PC-9 (cell line): ENCODE measurements at regions of chr2 and their contacts with region 1.

Region 1: DNA sequence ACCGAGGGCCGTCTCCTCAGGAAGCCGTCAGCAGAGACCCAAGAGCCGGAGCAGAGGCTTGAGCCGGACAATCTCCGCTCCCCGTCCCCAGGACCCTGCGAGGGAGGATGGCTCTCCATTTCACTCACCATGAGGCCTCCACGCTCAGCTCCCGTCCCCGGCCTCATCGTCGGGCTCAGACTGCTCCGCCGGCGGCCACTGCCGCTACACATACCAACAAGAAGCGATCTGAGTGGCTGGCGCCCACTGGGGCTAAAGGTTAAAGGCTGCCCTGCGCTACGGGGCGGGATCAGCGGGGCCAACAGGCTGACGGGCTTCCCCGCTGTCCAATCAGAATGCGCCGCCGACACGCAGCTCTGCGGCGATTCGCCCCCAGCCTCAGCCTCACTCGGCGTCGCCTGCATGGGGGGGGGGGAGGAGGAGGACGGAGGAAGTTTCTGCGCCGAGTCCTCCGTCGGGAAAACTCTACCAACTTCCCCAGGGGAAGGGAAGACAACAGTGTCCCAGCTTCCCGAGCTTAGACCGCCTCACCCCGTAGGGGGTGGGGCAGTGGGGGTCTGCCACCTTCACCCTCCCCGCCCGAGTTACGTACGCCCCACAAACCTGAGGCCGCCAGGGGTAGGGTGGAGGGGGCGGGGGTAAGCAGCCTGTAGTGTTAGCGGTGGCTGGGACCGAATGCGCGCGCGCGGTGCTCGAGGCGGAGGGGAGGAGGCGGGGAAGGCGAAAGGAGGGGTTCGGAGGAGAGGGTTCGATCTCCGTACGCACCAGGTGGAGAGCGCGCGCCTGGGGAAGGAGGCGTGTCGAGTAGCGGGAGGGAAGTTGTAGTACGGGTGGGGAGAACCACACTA is at the start of gene PRPF40A:
- DNase-seq: peak; percentile 93 to 98
- H3K4me3 ChIP-seq: peak within 1 kb of the TSS; percentile 87
- H3K27ac ChIP-seq: peak within 1 kb of the TSS; percentile 82
- H3K4me1 ChIP-seq: peaks cover 21% of the 10 kb centered on the region
- H3K27me3 ChIP-seq: no peaks in the 10 kb centered on the region
- CTCF ChIP-seq: no peak
- total RNA-seq, gene PRPF40A: 94.1 and 119 TPM in 2 replicates

Region 2: DNA sequence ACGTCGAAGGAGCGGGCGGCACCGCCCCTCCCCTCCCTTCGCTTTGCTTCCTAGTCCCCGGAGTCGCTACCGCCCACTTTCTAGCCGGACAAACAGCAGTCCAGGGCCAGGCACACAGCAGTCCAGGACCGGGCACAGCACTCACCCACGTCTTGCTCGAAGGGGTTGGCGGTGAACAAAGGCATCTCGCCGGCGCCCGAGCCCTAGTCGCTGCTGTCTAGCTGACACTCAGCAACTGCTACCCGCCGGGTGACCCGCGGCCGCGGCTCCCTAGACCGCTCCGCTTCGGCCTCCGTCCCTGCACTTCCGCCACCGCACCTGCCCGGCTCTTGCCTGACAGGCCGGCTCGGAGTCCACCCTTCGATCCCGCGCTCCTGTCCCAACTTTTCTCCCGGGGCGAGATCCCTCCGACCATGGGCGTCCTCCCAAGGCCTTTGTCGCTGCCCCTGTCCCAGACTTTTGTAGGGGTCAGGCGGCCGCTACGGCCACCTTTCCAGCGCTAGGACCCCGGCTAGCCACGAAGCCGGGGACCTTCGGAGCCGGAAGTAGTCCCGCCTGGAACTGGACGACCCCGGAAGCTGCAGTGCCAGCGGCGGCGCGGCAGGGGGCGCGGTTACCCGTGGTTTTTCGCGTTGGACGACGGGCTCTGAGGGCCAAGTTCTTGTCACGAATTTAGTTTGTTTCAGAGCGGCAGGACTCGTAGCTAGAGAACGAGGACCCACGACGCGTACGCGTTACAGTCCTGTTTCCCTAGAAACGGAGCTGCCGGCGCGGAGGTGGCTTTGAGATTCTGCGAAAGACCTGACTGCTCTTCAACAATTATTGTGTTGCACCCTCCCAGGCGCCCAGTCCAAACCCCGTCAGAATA is 541.8 kb before region 1 on chr2 and contains the start of gene STAM2:
- CTCF ChIA-PET with region 1: interaction called, 3 read pairs
- POLR2A ChIA-PET with region 1: interaction called, 5 read pairs
- intact Hi-C with region 1: loop called (anchors 1 kb)
- DNase-seq: peak; percentile 80 to 94
- H3K4me3 ChIP-seq: peak within 1 kb of the TSS; percentile 83
- H3K27ac ChIP-seq: peak within 1 kb of the TSS; percentile 84
- H3K4me1 ChIP-seq: peaks cover 22% of the 10 kb centered on the region
- H3K27me3 ChIP-seq: no peaks in the 10 kb centered on the region
- CTCF ChIP-seq: peak; percentile 95
- total RNA-seq, gene STAM2: 14.6 and 16.0 TPM in 2 replicates

Region 3: DNA sequence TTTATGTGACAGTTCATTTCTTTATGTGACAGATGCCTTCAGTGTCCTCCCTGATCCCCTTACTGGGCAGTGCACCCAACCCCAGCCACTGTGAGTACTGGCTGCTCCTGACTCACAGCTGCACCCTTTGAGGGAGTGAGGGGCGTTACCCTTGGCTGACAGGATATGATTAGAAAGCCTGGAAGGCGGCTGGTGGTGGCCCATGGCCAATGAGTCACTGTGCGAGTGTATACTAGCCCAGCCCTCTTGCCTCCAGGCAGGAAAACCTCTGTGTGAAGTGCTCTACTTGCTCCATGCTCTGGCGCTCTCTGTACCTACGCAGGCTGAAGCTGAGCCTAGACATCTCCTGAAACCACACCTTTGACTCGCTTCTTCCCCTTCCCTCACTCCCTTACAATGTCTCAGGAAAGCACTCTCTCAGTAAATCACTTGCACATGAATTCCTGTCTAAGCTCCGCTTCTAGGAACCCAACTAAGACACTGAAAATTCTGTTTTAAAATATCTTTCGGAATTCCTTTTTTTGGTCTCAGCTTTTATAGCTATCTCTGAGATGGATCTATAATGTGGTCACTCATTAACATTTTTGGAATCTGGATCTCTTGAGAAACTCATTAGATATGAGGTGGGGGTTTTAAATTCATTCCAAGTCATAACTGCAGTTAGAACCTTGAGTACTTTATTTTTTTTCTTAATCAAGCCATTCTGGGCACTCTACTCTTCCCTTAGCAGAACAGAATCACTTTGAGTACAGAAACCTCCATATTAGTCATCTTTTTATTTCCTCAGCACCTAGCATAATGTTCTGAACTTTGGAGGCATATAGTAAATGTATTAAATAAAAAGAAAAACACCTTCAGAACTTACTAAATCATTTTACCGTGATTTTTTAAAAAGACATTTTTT is 516.6 kb before region 1 on chr2:
- CTCF ChIA-PET with region 1: no interaction called
- POLR2A ChIA-PET with region 1: no interaction called
- intact Hi-C with region 1: loop called (anchors 1 kb)
- DNase-seq: peak; percentile 94 to 97
- H3K4me3 ChIP-seq: peak overlapping the region; percentile 36; the same call in 1 of the 2 replicates
- H3K27ac ChIP-seq: peak overlapping the region; percentile 77
- H3K4me1 ChIP-seq: peaks cover 24% of the 10 kb centered on the region
- H3K27me3 ChIP-seq: no peaks in the 10 kb centered on the region
- CTCF ChIP-seq: no peak

Region 4: GRCh38 chr2:152421521-152422370 is 295.7 kb before region 1 on chr2:
- CTCF ChIA-PET with region 1: no interaction called
- POLR2A ChIA-PET with region 1: no interaction called
- intact Hi-C with region 1: loop called (anchors 10 kb)
- DNase-seq: peak; percentile 50 to 95
- H3K4me3 ChIP-seq: no peak overlapping the region
- H3K27ac ChIP-seq: peak overlapping the region; percentile 81
- H3K4me1 ChIP-seq: peaks cover 32% of the 10 kb centered on the region
- H3K27me3 ChIP-seq: no peaks in the 10 kb centered on the region
- CTCF ChIP-seq: no peak